A549 (cell line): ENCODE measurements at regions of chr7 and their contacts with region 1.

Region 1: GRCh38 chr7:134547397-134548054 is 1.4 kb upstream of the AKR1B15 start:
- DNase-seq: peak; percentile 85 to 97
- ATAC-seq: peak; percentile 54 to 74
- H3K4me3 ChIP-seq: peak overlapping the region; percentile 24
- H3K27ac ChIP-seq: peak overlapping the region; percentile 79 to 86
- H3K4me1 ChIP-seq: peaks cover 64% of the 10 kb centered on the region
- CTCF ChIP-seq: peak; percentile 100
- EP300 ChIP-seq: no peak
- POLR2A ChIP-seq: no peak
- RAD21 ChIP-seq: peak; percentile 84 to 86

Region 2: DNA sequence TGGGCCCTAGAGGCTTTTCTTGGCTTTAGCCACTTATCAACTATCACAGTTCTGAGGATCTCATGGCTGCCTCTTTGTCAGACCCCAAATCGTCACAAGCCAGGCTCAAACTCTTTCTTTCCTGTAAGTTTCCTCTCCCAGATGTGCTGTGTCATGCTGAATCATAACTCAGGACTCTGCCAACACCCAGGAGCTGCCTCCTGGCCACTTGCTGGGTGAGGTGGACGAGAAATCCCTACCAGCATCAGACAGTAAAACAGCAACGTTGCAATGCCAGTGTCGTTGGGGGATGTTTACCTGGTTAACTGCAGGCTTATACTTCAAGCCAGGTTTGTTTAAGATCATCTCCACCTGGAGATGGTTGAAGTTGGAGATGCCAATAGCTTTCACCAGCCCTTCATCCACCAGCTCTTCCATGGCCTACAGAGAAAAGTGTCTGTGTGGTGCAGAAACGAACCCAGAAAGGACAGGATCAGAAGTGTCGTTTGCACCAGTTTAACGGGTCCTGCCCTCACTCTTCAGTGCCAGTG is 98.8 kb before region 1 on chr7:
- CTCF ChIA-PET with region 1: interaction called, 15 read pairs
- POLR2A ChIA-PET with region 1: no interaction called
- DNase-seq: peak; percentile 94 to 97
- ATAC-seq: peak; percentile 58 to 71
- H3K4me3 ChIP-seq: no peak overlapping the region
- H3K27ac ChIP-seq: peak overlapping the region; percentile 94 to 95
- H3K4me1 ChIP-seq: peaks cover 97% of the 10 kb centered on the region
- CTCF ChIP-seq: no peak
- EP300 ChIP-seq: peak in 1 of 2 experiments; percentile 42; a peak in 1 of 5 replicates
- POLR2A ChIP-seq: no peak
- RAD21 ChIP-seq: no peak; a peak in 1 of 5 replicates

Region 3: GRCh38 chr7:134562136-134562535 is 14.6 kb after region 1 on chr7:
- CTCF ChIA-PET with region 1: interaction called, 134 read pairs
- POLR2A ChIA-PET with region 1: interaction called, 4 read pairs
- DNase-seq: peak in 1 of 2 experiments; percentile 52
- ATAC-seq: peak in 1 of 2 experiments; percentile 47; a peak in 3 of 6 replicates
- H3K4me3 ChIP-seq: peak overlapping the region; percentile 16; the same call in 1 of the 3 replicates
- H3K27ac ChIP-seq: peak overlapping the region; percentile 91 to 96
- H3K4me1 ChIP-seq: peaks cover 22% of the 10 kb centered on the region
- CTCF ChIP-seq: no peak
- EP300 ChIP-seq: no peak
- POLR2A ChIP-seq: no peak
- RAD21 ChIP-seq: no peak

Region 4: DNA sequence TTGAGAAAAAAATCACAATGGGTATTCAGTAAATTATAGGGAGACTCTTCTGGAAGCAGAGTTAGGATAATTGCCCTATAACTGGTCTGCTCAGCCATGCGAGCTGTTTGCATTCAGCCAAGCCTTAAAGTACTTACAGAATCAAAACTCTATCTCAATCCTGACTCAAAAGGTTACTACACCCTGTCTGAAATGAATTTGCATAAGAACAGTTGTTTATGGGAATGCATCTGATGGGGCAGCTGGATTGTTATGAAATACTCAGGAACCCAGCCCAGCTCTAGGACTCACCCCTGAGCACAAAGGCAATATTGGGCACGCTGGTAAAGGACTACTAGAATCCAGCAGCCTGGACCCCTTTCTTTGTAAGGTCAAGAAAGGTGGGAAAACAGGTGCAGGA is 40.2 kb after region 1 on chr7:
- CTCF ChIA-PET with region 1: interaction called, 13 read pairs
- POLR2A ChIA-PET with region 1: interaction called, 4 read pairs
- DNase-seq: no peak
- ATAC-seq: no peak
- H3K4me3 ChIP-seq: no peak overlapping the region
- H3K27ac ChIP-seq: peak overlapping the region in 1 of 2 experiments; percentile 15; a peak in 1 of 6 replicates
- H3K4me1 ChIP-seq: peaks cover 9% of the 10 kb centered on the region
- CTCF ChIP-seq: no peak
- EP300 ChIP-seq: no peak
- POLR2A ChIP-seq: no peak
- RAD21 ChIP-seq: no peak

Region 5: DNA sequence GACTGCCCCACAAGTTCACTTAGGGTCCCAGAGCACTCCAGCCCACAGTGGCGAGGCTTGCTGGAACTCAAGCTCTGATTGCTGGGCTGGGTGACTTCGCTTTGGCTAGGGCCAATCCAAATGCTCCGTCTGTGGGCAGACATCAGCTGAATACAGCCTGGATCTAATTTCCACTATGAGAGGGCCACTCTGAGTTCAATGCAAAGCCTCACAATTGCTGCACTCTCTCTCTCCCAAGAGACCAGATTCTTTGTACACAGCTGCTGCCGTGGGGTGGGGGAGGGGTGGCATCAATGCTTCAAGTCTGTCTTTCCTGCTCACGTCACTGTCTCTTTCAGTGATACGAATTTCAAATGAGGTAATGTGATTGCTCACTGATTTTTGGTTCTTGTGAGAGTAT is 51.8 kb after region 1 on chr7:
- CTCF ChIA-PET with region 1: interaction called, 92 read pairs
- POLR2A ChIA-PET with region 1: no interaction called
- DNase-seq: no peak
- ATAC-seq: no peak
- H3K4me3 ChIP-seq: no peak overlapping the region
- H3K27ac ChIP-seq: peak overlapping the region in 1 of 2 experiments; percentile 54; a peak in 2 of 6 replicates
- H3K4me1 ChIP-seq: peaks cover 41% of the 10 kb centered on the region
- CTCF ChIP-seq: no peak
- EP300 ChIP-seq: no peak
- POLR2A ChIP-seq: no peak
- RAD21 ChIP-seq: no peak

Region 6: DNA sequence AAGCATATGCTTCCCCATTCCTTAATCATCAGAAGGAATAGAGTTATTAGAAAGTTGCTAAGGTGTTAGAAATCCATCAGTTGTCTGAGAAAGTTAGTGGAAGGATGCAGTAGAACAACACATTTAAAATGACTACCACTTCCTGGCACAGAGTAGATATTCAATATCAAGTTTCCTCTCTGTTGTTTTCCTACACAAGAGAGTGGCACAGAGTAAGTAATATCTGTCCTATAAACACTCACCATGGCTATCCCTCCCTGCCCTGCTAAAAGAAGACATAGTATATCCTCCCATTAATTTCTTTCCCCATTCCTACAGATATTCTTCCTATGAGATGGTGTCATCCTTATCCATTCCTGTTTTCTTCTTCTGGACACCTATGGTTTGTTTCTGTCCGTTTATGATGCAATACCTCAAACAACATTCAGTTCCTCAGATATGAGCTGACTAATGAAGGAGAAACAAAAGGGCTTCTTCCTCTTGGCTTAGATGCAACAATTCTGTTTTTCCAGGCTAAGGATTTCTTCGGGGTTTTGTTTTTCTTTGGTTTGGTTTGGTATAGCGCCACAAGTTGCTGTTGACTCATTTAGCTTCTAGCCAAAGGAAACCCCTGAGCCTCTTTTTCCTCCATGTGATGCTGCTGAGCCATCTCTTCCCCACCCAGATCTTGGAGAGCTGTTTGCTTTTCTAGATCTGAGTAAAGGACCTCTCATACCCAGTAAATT is 66.3 kb after region 1 on chr7:
- CTCF ChIA-PET with region 1: interaction called, 92 read pairs
- POLR2A ChIA-PET with region 1: no interaction called
- DNase-seq: peak; percentile 57 to 86
- ATAC-seq: peak; percentile 90 to 94
- H3K4me3 ChIP-seq: no peak overlapping the region
- H3K27ac ChIP-seq: peak overlapping the region; percentile 72 to 80
- H3K4me1 ChIP-seq: peaks cover 25% of the 10 kb centered on the region
- CTCF ChIP-seq: no peak
- EP300 ChIP-seq: peak; percentile 50 to 73; a peak in 3 of 5 replicates
- POLR2A ChIP-seq: no peak
- RAD21 ChIP-seq: peak; percentile 7 to 46; a peak in 3 of 5 replicates

Region 7: DNA sequence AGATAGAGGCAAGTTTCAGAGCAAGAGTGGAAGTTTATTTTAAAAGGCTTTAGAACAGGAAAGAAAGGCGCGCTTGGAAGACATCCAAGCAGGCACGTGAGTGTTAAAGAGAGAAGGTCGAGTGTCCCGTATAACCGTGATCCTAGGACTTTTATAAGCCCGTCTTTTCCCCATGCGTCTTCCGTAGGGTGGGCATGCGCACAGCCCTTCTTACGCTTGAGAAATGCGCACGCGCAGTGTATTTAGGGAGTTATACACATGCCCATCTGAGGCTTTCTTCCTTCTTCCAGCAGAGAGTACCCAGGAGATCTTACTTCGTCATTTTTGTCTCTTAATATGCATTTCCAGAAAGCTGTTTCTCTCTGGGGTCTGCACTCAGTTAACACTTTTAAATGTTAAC is 284.3 kb after region 1 on chr7:
- CTCF ChIA-PET with region 1: no interaction called
- POLR2A ChIA-PET with region 1: no interaction called
- DNase-seq: no peak
- ATAC-seq: no peak
- H3K4me3 ChIP-seq: no peak overlapping the region
- H3K27ac ChIP-seq: no peak overlapping the region
- H3K4me1 ChIP-seq: no peaks in the 10 kb centered on the region
- CTCF ChIP-seq: no peak
- EP300 ChIP-seq: no peak
- POLR2A ChIP-seq: no peak
- RAD21 ChIP-seq: no peak